Activated CD4-positive, alpha-beta T cell treated with anti-CD3 and anti-CD28 coated beads for 36 hours (primary cell): ENCODE measurements at regions of chr1 and their contacts with region 1.

Region 1: DNA sequence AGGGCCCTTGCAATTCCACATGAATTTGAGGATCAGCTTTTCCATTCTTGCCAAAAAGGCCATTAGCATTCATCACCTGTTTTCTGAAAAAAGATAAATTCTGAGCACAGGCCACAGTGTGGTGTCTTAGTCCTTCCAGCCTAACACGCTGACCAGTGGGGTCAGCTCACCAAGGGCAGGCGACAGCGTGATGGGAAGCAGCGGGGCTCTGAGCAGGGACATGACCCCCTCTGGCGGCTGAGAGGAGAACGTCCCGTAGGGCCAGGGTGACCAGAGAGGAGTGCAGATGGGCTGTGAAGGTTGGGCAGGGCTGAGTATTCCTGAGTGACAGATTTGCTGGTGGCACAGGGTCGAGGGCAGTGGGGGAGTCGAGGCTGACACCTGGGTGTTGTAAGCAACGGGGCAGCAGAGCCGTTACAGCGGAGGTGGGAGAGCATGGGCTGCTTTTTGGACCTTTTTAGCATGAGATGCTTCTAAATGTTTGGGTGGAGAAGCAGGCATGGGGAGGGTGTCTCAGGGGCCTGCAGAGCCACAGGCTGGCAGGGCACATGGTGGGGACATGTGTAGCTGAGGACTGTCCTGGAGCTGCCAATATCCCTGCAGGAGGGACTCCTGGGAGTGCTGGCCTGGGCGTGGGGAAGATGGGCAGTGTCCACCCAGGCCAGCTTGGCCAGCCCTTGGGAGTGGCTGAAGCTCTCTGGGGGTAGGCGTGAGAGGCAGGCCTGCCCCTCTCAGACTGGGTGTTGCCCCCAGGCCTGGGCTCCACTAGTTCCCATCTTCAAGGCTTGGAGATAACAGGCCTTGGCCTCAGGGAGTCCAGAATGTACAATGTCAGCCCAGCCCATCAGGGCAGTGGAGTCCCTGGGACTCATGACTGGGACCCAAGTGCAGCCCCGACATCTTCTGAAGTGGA is 8.6 kb upstream of the CALML6 start:
- DNase-seq: peak; percentile 86
- ATAC-seq: peak; percentile 52
- H3K4me3 Mint-ChIP-seq: peak overlapping the region; percentile 0
- H3K27ac Mint-ChIP-seq: no peak overlapping the region
- H3K4me1 Mint-ChIP-seq: peaks cover 14% of the 10 kb centered on the region
- H3K27me3 Mint-ChIP-seq: no peaks in the 10 kb centered on the region

Region 2: GRCh38 chr1:1406817-1407635 is 499.4 kb before region 1 on chr1 and contains the start of gene MRPL20:
- CTCF ChIA-PET with region 1: no interaction called
- POLR2A ChIA-PET with region 1: no interaction called
- intact Hi-C with region 1: loop called in 1 of 2 experiments (anchors 10 kb)
- DNase-seq: peak; percentile 98
- ATAC-seq: peak; percentile 95
- H3K4me3 Mint-ChIP-seq: peak within 1 kb of the TSS; percentile 92
- H3K27ac Mint-ChIP-seq: peak within 1 kb of the TSS; percentile 91
- H3K4me1 Mint-ChIP-seq: peaks cover 41% of the 10 kb centered on the region
- H3K27me3 Mint-ChIP-seq: no peaks in the 10 kb centered on the region
- total RNA-seq, gene MRPL20: 126 to 143 TPM

Region 3: GRCh38 chr1:1721201-1721600 is 185.2 kb before region 1 on chr1:
- CTCF ChIA-PET with region 1: no interaction called
- POLR2A ChIA-PET with region 1: no interaction called
- intact Hi-C with region 1: loop called in 1 of 2 experiments (anchors 5 kb)
- DNase-seq: no peak
- ATAC-seq: no peak
- H3K4me3 Mint-ChIP-seq: no peak overlapping the region
- H3K27ac Mint-ChIP-seq: peak overlapping the region; percentile 60
- H3K4me1 Mint-ChIP-seq: peaks cover 5% of the 10 kb centered on the region
- H3K27me3 Mint-ChIP-seq: no peaks in the 10 kb centered on the region

Region 4: GRCh38 chr1:1777950-1778662 is 128.3 kb before region 1 on chr1 and contains the start of gene NADK:
- CTCF ChIA-PET with region 1: interaction called, 13 read pairs
- POLR2A ChIA-PET with region 1: interaction called, 3 read pairs
- intact Hi-C with region 1: loop called (anchors 1 to 5 kb)
- DNase-seq: peak; percentile 77
- ATAC-seq: peak; percentile 42
- H3K4me3 Mint-ChIP-seq: peak within 1 kb of the TSS; percentile 78
- H3K27ac Mint-ChIP-seq: peak within 1 kb of the TSS; percentile 83
- H3K4me1 Mint-ChIP-seq: peaks cover 62% of the 10 kb centered on the region
- H3K27me3 Mint-ChIP-seq: no peaks in the 10 kb centered on the region
- total RNA-seq, gene NADK: 53.1 to 56.2 TPM

Region 5: DNA sequence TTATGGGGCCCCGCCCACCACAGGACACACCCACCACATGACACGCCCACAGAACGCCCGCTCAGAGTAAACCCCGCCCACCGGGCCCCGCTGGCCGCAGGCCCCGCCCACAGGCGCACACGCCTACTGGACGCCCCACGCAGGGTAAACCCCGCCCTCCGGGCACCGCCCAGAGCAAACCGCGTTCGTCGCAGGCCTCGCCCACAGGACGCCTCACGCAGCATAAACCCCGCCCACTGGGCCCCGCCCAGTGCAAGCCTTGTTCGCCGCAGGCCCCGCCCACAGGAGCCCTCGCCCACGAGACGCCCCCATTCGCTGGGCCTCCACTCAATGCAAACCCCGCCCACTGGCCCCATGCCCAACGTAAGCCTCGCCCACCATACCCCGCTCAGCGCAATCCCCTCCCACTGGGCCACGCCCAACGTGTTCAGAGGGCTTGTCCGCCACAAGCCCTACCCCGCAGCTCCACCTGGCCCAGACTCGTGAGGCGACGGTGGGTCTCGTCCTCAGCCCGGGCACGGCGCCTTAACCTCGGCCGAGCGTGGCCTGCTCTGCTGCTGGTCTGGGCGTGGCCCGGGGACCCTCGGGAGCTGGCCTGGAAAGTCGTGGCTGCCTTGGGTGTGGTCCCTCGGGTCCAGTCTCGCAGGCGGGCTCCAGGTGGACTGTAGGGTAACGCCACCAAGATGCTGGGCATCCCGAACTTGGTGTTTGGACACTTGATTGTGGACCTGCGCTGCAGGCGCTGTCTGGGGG is 13.0 kb after region 1 on chr1:
- CTCF ChIA-PET with region 1: interaction called, 7 read pairs
- POLR2A ChIA-PET with region 1: no interaction called
- intact Hi-C with region 1: loop called (anchors 1 kb)
- DNase-seq: peak; percentile 100
- ATAC-seq: peak; percentile 92
- H3K4me3 Mint-ChIP-seq: peak overlapping the region; percentile 62
- H3K27ac Mint-ChIP-seq: no peak overlapping the region
- H3K4me1 Mint-ChIP-seq: peaks cover 4% of the 10 kb centered on the region
- H3K27me3 Mint-ChIP-seq: no peaks in the 10 kb centered on the region

Region 6: DNA sequence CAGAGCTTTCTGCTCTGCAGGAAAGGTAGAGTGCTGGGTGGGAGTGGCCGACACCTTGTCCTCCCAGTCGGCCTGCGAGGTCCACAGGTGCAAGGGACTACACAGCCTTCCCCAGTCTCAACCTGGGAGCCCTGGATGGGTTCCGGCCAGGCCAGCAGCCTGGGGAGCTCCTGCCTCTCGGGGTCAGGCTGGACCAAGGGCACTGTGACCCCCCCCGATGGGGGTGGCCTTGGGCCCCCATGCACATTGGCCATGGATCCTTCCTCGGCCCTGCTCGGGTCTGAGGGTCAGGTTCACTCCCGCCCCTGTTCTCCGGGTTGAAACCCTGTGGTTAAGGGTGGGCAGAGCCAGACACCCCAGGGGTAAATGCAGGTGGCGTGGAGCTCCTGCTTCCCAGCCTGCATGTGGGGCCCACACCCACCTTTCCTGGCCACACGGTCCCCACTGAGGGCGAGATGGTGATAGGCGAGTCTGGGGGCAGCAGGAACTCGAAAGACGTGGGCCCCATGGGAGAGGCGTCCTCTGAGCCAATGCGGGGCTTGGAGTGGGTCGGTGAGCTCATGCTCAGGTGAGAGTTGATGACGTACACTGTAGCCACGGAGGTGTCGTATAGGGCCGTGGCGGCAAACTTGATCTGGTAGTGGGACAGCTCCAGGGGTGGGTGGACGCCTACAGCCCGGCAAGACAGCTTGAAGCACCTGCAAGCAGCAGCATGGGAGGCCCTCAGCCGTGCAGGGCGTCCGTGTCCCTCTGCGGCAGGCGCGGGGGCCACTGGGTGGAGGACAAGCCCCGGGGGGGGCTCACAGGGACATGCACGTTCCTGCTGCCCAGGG is 23.4 kb after region 1 on chr1:
- CTCF ChIA-PET with region 1: no interaction called
- POLR2A ChIA-PET with region 1: no interaction called
- intact Hi-C with region 1: no loop called
- DNase-seq: no peak
- ATAC-seq: no peak
- H3K4me3 Mint-ChIP-seq: no peak overlapping the region
- H3K27ac Mint-ChIP-seq: no peak overlapping the region
- H3K4me1 Mint-ChIP-seq: no peaks in the 10 kb centered on the region
- H3K27me3 Mint-ChIP-seq: no peaks in the 10 kb centered on the region

Region 7: DNA sequence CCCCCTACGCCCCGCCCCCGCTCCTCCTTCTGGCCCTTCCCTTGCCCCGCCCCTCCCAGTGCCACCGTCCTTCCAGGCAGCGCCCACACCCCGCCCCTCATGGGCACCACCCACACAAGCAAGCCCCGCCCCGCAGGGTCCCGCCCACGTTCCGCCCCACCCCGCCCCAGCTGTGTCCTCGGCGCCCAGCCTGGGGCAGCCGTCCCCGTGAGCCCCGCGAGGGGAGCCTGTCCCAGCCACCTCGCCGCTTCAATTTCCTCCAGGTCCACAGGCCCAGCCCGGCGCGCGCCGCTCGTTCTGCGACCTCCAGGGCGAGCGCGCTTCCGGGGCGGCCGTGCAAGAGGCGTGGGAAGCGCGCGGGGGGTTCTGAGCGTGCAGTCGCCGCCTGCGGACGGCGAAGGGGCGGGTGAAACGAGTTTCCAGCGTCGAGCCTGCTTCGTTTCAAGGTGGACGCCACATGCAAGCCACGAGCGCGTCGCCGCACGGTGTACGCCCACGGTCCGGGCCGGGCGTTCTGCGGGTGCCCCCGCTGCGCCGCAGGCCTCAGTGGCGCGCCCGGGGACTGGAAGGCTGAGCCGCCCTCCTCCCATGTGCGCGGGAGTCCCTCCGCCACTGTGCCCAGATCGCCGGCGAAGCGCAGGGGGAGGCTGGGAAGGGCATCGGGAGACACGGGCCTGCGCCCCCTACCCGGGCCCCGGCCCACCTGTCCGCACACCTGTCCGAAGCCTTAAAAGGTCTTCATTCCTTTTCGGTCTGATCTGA is 298.9 kb after region 1 on chr1:
- CTCF ChIA-PET with region 1: no interaction called
- POLR2A ChIA-PET with region 1: no interaction called
- intact Hi-C with region 1: loop called in 1 of 2 experiments (anchors 1 kb)
- DNase-seq: peak; percentile 98
- ATAC-seq: peak; percentile 88
- H3K4me3 Mint-ChIP-seq: peak overlapping the region; percentile 51
- H3K27ac Mint-ChIP-seq: no peak overlapping the region
- H3K4me1 Mint-ChIP-seq: peaks cover 3% of the 10 kb centered on the region
- H3K27me3 Mint-ChIP-seq: no peaks in the 10 kb centered on the region